ENCODE measurements at regions of chr2 and their contacts with region 1.

Region 1: DNA sequence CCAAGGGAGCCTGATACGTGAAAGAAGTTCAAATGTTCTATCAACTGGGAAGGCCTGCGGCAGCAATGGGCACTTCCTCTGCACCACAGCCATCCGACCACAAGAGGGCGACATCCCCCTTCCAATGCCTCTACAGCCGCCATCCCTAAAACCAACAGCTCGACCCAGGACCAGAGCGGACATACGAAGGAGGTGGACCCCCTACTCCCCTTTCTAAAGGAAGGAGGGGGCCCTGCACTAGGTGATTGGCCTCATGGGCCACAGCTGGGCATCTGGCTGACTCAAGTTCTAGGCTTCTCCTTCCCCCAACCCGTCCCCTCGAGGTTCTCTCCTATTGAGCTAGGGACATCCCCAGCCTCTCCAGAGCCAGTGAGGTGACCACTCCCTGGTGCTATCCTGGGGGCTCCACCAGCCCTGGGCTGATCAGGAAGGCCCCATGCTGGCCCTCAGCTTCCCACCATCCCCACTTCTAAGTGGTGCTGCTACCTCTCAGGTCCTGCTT is 217.2 kb downstream of the TNS1 start:
- DNase-seq: peak; percentile 63
- H3K4me3 Mint-ChIP-seq: no peak overlapping the region
- H3K27ac Mint-ChIP-seq: no peak overlapping the region
- H3K4me1 Mint-ChIP-seq: peaks cover 12% of the 10 kb centered on the region
- H3K27me3 Mint-ChIP-seq: peaks cover 9% of the 10 kb centered on the region

Region 2: DNA sequence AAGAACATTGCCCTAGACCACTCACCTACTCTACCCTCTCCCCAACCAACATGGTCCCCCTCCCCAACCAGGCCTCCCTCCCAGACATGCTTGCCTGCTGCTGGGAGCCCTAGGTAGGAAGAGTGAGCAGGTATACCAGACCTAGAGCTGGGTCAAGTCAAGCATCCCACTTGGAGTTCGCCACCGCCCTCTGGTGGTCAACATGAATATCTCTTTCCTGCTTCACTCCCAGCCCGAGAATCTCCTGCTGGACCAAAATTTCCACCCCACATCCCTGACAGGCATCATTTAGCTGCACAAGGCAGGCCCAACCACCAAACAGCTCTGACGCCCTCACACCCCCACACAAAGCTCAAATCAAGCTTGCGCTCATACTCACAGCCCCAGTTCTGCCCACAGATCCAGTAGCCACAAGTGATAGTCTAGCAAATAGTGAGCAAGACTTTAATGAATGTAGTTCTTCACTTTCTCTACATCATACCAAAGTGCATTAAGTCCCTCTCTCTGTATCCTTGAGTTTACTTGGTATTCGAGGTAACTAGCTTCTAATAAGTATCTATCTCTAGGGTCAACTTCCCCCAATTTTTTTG is 101.2 kb after region 1 on chr2:
- intact Hi-C with region 1: loop called (anchors 1 kb)
- DNase-seq: peak; percentile 44
- H3K4me3 Mint-ChIP-seq: no peak overlapping the region
- H3K27ac Mint-ChIP-seq: no peak overlapping the region
- H3K4me1 Mint-ChIP-seq: peaks cover 2% of the 10 kb centered on the region
- H3K27me3 Mint-ChIP-seq: no peaks in the 10 kb centered on the region

Region 3: DNA sequence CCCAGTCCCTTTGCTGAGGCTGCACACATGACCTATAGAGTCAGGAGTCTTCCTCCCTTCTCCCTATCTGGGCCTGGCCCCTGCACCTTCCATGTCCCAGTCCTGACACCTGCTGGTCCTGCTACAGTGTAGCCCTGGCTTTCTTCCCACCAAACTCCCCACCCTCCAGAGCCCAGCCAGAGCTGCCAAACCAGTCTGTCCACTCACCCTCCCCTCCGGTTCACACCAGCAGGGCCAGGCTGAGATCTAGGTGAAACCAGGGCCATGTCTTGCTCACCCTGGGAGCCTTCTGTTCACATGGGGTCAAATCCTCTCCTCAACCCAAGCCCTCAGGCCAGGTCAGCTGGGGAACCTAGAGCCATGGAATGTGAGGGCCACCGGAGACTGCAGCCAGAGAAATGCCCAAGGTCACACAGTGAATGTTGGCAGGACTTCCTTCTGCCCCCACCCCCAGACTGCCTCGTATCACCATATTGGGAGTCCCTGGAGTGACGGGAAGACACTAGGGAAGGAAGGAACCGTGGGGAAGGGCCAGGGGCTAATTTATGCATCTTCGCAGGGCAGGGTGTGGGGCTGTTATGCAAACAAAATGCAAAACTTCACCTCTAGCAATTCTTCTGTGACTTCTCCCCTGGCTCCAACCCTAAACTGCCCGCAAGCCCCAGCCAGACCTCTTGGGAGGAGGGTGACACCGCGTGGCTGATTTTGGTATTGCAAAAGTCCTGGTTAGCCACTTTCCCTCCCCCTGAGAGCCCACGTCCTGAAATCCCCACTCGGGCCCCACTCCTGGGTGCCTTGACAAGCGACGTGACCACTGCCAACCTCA is 202.6 kb after region 1 on chr2:
- intact Hi-C with region 1: loop called (anchors 1 kb)
- DNase-seq: peak; percentile 50
- H3K4me3 Mint-ChIP-seq: no peak overlapping the region
- H3K27ac Mint-ChIP-seq: no peak overlapping the region
- H3K4me1 Mint-ChIP-seq: peaks cover 7% of the 10 kb centered on the region
- H3K27me3 Mint-ChIP-seq: peaks cover 3% of the 10 kb centered on the region

Region 4: GRCh38 chr2:218066926-218067515 is 281.4 kb after region 1 on chr2:
- intact Hi-C with region 1: loop called (anchors 5 kb)
- DNase-seq: no peak
- H3K4me3 Mint-ChIP-seq: no peak overlapping the region
- H3K27ac Mint-ChIP-seq: no peak overlapping the region
- H3K4me1 Mint-ChIP-seq: peaks cover 3% of the 10 kb centered on the region
- H3K27me3 Mint-ChIP-seq: peaks cover 2% of the 10 kb centered on the region

Region 5: GRCh38 chr2:218129458-218130135 is 344.0 kb after region 1 on chr2:
- intact Hi-C with region 1: no loop called
- DNase-seq: no peak
- H3K4me3 Mint-ChIP-seq: no peak overlapping the region
- H3K27ac Mint-ChIP-seq: no peak overlapping the region
- H3K4me1 Mint-ChIP-seq: peaks cover 8% of the 10 kb centered on the region
- H3K27me3 Mint-ChIP-seq: peaks cover 11% of the 10 kb centered on the region